ENCODE measurements at regions of chr4 and their contacts with region 1.

Region 1: GRCh38 chr4:2714061-2714770 is 41.9 kb downstream of the TNIP2 start:
- DNase-seq: peak in 1 of 5 donors; percentile 24
- H3K4me3 ChIP-seq: no peak overlapping the region
- H3K27ac ChIP-seq: no peak overlapping the region
- H3K4me1 ChIP-seq: no peaks in the 10 kb centered on the region
- H3K27me3 ChIP-seq: no peaks in the 10 kb centered on the region
- CTCF ChIP-seq: no peak
- EP300 ChIP-seq: no peak
- POLR2A ChIP-seq: no peak

Region 2: GRCh38 chr4:2141762-2142451 is 572.3 kb before region 1 on chr4:
- intact Hi-C with region 1: no loop called
- DNase-seq: no peak
- H3K4me3 ChIP-seq: no peak overlapping the region
- H3K27ac ChIP-seq: no peak overlapping the region
- H3K4me1 ChIP-seq: no peaks in the 10 kb centered on the region
- H3K27me3 ChIP-seq: no peaks in the 10 kb centered on the region
- CTCF ChIP-seq: no peak
- EP300 ChIP-seq: no peak
- POLR2A ChIP-seq: no peak

Region 3: DNA sequence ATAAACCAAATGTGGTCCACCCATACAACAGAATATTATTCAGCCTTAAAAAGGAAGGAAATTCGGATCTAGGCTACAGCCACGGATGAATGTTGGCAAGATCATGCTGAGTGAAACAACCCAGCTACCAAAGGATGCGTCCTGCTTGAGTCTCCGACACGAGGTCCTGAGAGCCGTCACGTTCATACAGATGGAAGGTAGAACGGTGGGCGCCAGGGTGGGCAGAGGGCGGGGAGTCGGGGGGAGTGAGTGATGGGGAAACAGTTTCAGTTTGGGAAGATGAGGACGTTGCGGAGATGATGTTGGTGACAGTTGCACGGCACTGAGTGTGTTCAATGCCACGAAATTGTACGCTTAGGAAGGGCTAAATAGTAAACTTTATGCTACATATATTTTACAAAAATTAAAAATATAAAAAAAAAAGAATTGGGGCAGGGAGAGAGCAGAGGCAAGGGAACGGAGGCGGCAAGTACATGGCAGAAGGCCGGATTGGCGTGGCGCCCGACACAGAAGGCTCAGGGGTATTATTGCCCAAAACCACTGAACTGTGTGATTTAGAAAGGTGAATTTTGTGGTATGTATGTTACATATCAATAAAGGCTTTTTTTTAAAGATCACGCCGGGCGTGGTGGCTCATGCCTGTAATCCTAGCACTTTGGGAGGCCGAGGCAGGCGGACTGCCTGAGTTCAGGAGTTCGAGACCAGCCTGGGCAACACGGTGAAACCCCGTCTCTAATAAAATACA is 437.5 kb before region 1 on chr4:
- intact Hi-C with region 1: no loop called
- DNase-seq: no peak
- H3K4me3 ChIP-seq: no peak overlapping the region
- H3K27ac ChIP-seq: no peak overlapping the region
- H3K4me1 ChIP-seq: no peaks in the 10 kb centered on the region
- H3K27me3 ChIP-seq: no peaks in the 10 kb centered on the region
- CTCF ChIP-seq: no peak
- EP300 ChIP-seq: no peak
- POLR2A ChIP-seq: no peak

Region 4: GRCh38 chr4:2647403-2648158 is 66.6 kb before region 1 on chr4:
- intact Hi-C with region 1: no loop called
- DNase-seq: peak in 2 of 5 donors; percentile 5 to 10
- H3K4me3 ChIP-seq: no peak overlapping the region
- H3K27ac ChIP-seq: no peak overlapping the region
- H3K4me1 ChIP-seq: no peaks in the 10 kb centered on the region
- H3K27me3 ChIP-seq: no peaks in the 10 kb centered on the region
- CTCF ChIP-seq: no peak
- EP300 ChIP-seq: no peak
- POLR2A ChIP-seq: no peak

Region 5: DNA sequence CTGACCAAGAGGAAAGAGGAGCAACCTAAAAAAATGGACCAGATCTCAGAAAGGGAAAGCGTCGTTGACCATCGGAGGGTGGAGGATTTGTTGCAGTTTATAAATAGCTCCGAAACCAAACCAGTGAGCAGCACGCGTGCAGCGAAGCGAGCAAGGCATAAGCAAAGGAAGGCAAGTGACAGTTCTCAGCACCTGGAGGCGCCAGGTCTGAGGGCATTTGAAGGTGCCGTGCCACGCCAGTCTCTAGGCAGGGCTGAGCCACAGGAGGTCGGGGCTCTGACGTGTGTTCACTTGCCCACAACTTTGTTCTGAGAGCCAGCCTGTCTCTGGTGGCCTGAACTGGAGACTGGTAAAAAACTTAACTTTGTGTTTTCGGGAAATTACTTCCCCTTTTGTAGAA is 17.8 kb before region 1 on chr4:
- intact Hi-C with region 1: loop called in 1 of 4 experiments (anchors 1 kb)
- DNase-seq: no peak
- H3K4me3 ChIP-seq: no peak overlapping the region
- H3K27ac ChIP-seq: no peak overlapping the region
- H3K4me1 ChIP-seq: no peaks in the 10 kb centered on the region
- H3K27me3 ChIP-seq: no peaks in the 10 kb centered on the region
- CTCF ChIP-seq: no peak
- EP300 ChIP-seq: no peak
- POLR2A ChIP-seq: no peak

Region 6: GRCh38 chr4:2811830-2812611 is 97.8 kb after region 1 on chr4:
- intact Hi-C with region 1: no loop called
- DNase-seq: peak in 4 of 5 donors; percentile 50 to 74 (median 56)
- H3K4me3 ChIP-seq: peak overlapping the region; percentile 7
- H3K27ac ChIP-seq: peak overlapping the region in 1 of 2 donors; percentile 29
- H3K4me1 ChIP-seq: peaks cover 19% of the 10 kb centered on the region
- H3K27me3 ChIP-seq: no peaks in the 10 kb centered on the region
- CTCF ChIP-seq: no peak
- EP300 ChIP-seq: no peak
- POLR2A ChIP-seq: no peak